ENCODE measurements at regions of chr6 and their contacts with region 1.

Region 1: DNA sequence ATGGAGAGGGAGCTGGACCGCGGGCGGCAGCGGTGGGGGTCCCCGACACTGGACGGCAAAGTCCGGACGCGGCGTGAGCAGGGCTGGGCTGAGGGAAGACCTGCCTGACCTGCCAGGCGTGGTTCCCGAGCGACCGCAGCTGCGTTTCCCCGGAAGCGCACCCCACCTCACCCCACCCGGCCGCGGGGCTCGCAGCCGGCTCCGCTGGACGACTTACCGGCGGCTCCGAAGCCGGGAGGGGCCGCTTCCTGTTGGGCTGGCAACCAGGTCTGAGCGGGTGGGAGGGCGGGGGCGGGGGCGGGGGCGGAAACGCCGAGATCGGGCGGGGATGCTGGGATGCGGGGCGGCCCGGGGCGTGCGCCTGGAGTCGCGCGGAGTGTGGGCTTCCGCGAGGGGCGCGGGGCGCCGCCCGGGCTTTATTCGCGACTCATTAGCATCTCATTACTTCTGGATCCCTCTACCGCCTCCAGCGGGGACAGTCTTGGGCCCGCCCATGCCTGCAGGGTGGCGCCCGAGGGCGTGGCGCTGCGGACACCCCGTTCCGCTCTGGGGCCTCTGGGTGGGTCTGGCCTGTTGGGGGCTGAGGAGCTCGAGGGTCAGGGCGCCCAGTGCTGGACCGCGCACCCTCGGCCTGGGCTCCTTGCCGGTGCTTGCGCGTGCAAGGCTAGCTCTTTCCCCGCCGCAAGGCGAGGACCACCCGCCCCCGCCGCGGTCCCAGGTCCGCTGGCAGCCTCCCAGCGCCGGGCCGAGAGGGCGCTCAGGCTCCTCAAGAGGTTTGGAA is at the start of gene MICAL1:
- DNase-seq: peak; percentile 93
- H3K4me3 ChIP-seq: peak within 1 kb of the TSS; percentile 82
- H3K27ac ChIP-seq: peak within 1 kb of the TSS; percentile 99
- H3K4me1 ChIP-seq: peaks cover 82% of the 10 kb centered on the region
- CTCF ChIP-seq: peak; percentile 44; the same call in 1 of the 2 replicates
- total RNA-seq, gene MICAL1: 69.2 and 79.5 TPM in 2 replicates

Region 2: DNA sequence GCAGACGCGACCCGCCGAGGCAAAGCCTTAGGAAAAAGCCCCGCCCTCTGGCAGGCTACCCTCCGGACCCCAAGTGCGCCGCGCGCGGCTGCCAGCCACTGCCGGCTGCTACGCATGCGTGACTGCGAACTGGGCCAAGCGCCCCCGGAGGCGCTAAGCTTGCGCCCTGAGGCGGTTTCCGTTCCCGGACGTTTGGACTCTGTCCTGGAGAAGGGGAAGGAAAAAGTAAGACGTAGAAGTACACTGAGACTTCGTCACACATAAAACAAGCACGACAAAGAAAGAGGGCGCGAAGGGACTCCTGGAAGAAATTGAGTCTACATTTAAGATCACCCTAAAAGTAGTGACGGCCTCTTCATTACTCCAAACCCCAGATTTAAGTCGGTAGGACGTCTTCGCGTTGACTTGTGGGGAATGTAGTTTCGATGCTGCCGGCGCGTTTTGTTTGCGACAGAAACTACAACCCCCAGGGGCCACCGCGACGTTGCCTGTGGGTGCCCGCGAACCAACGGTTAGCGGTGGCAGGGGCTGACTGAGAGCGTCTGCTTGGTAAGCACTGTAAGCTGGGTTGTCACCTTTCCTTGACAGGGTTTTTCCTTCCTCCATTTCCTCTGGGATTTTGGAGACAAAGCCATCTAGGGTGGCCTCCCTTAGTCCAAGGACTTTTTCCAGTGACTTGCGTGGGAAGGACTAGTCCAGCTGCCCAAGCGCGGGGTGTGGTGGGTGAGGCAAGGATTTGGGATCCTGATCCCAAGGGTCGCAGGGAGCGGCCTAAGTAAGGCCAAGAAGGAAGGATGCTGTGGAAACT is 360.5 kb before region 1 on chr6 and contains the start of gene CEP57L1:
- CTCF ChIA-PET with region 1: no interaction called
- POLR2A ChIA-PET with region 1: no interaction called
- intact Hi-C with region 1: loop called (anchors 10 kb)
- DNase-seq: peak; percentile 98
- H3K4me3 ChIP-seq: peak within 1 kb of the TSS; percentile 92
- H3K27ac ChIP-seq: peak within 1 kb of the TSS; percentile 87
- H3K4me1 ChIP-seq: peaks cover 25% of the 10 kb centered on the region
- CTCF ChIP-seq: peak; percentile 46; the same call in 1 of the 2 replicates
- total RNA-seq, gene CEP57L1: 22.7 and 26.7 TPM in 2 replicates

Region 3: DNA sequence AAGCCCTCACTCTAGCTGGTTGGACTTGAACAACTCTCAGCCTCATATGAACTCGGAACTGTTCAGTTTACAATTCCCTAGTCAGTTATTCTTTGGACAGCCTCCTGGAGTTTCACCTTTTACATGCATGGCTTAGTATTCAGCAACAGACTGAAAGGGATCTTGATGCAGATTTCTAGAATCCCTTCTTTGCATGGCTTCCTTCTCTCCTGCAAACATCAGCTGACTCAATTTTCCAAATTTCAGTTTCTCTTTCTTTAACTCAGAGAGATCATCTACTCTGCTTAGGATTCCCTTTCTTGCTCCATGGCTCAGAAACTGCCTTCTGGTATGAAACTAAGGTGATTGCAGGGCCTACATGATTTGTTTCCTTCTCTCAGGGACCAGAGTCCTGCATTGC is 260.8 kb before region 1 on chr6:
- CTCF ChIA-PET with region 1: no interaction called
- POLR2A ChIA-PET with region 1: no interaction called
- intact Hi-C with region 1: no loop called
- DNase-seq: no peak
- H3K4me3 ChIP-seq: no peak overlapping the region
- H3K27ac ChIP-seq: no peak overlapping the region
- H3K4me1 ChIP-seq: no peaks in the 10 kb centered on the region
- CTCF ChIP-seq: no peak

Region 4: GRCh38 chr6:109428889-109429477 is 26.7 kb before region 1 on chr6:
- CTCF ChIA-PET with region 1: no interaction called
- POLR2A ChIA-PET with region 1: no interaction called
- intact Hi-C with region 1: no loop called
- DNase-seq: no peak
- H3K4me3 ChIP-seq: no peak overlapping the region
- H3K27ac ChIP-seq: no peak overlapping the region
- H3K4me1 ChIP-seq: peaks cover 13% of the 10 kb centered on the region
- CTCF ChIP-seq: no peak

Region 5: DNA sequence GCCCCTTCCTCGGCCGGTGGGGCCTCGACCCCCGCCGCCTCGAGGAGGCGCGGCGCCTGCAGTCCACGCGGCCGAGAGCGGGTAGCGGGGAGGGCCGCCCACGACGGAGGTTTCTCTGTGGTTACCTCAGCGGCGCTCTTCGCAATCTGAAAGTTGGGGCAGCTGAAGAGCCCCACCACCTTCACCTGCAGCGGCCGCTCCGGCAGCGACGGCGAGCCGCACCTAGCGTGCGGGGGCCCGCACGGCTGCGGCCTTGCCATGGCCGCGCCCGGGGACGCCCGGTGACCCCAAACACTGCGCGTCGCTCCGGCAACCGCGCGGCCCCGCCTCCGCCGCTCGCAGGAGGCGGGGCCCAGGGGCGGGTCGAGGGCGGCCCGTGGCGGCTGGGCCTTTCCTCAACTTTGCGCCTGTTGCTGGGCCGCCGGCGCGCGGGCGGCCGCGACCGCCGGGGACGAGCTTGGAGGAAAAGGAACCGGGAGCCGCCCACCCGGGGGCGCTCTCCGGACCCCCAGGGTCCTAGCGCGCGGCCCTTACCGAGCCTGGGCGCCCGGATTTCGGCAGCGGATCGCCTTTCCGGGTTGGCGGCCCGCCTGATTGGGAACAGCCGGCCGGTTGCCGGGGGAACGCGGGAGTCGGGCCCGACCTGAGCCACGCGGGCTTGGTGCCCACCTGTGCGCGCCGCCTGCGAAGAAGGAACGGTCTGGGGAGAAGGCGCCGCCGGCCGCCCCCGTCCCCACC is 15.2 kb before region 1 on chr6 and contains the starts of genes PPIL6 and SMPD2:
- CTCF ChIA-PET with region 1: interaction called, 5 read pairs
- POLR2A ChIA-PET with region 1: interaction called, 64 read pairs
- intact Hi-C with region 1: loop called (anchors 1 kb)
- DNase-seq: peak; percentile 89
- H3K4me3 ChIP-seq: peak within 1 kb of the TSS; percentile 83
- H3K27ac ChIP-seq: peak within 1 kb of the TSS; percentile 57
- H3K4me1 ChIP-seq: peaks cover 18% of the 10 kb centered on the region
- CTCF ChIP-seq: peak; percentile 57
- total RNA-seq, gene PPIL6: 0.15 and 1.6 TPM in 2 replicates
- total RNA-seq, gene SMPD2: 18.4 and 24.4 TPM in 2 replicates

Region 6: GRCh38 chr6:109465772-109466171 is 10.1 kb after region 1 on chr6:
- CTCF ChIA-PET with region 1: no interaction called
- POLR2A ChIA-PET with region 1: interaction called, 20 read pairs
- intact Hi-C with region 1: no loop called
- DNase-seq: no peak
- H3K4me3 ChIP-seq: no peak overlapping the region
- H3K27ac ChIP-seq: no peak overlapping the region
- H3K4me1 ChIP-seq: peaks cover 18% of the 10 kb centered on the region
- CTCF ChIP-seq: no peak

Region 7: GRCh38 chr6:109477725-109478124 is 22.0 kb after region 1 on chr6:
- CTCF ChIA-PET with region 1: interaction called, 3 read pairs
- POLR2A ChIA-PET with region 1: interaction called, 19 read pairs
- intact Hi-C with region 1: loop called (anchors 1 kb)
- DNase-seq: no peak
- H3K4me3 ChIP-seq: peak overlapping the region; percentile 96
- H3K27ac ChIP-seq: no peak overlapping the region
- H3K4me1 ChIP-seq: peaks cover 74% of the 10 kb centered on the region
- CTCF ChIP-seq: no peak

Region 8: DNA sequence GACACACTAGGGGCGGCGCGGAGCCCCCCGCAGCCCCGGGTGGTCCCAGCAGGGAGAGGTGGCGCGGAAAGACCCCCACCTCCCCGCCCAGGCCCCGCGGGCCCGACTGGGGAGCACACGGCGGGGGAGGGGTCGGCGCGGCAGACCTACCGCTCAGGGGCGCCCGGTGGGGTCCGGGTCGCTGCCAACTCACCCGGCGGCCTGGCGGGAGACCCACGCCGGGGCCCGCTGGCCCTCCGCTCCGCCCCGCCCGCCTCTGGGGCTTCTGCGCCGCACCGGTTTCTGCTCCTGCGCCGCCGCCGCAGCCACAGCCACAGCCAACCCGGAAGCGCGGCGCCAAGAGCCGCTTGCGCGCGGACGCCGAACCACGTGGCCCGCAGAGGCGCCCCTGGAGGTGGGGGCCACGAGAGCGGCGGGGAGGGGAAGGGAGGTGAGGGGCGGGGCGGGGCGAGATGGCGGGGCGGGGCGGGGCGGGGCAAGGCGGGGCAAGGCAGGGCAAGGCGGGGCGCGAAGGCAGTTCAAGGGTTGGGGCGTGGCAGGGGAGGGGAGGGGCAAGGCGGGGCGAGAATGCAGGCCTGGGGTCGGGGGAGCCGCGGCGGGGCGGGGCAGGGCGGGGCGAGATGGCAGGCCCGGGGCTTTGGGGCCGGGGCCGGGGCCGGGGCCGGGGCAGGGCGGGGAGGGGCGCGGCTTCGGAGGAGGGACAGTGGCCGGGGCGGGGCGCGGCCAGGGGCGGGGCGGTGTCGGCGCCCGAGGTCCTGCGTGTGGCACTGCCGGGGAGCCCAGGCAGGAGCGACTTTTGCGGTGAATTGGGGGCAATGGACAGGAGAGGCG is 27.4 kb after region 1 on chr6 and contains the start of gene ZBTB24:
- CTCF ChIA-PET with region 1: interaction called, 3 read pairs
- POLR2A ChIA-PET with region 1: interaction called, 19 read pairs
- intact Hi-C with region 1: loop called (anchors 1 kb)
- DNase-seq: peak; percentile 95
- H3K4me3 ChIP-seq: peak within 1 kb of the TSS; percentile 96
- H3K27ac ChIP-seq: peak within 1 kb of the TSS; percentile 51
- H3K4me1 ChIP-seq: peaks cover 49% of the 10 kb centered on the region
- CTCF ChIP-seq: no peak
- total RNA-seq, gene ZBTB24: 13.7 and 15.3 TPM in 2 replicates

Region 9: GRCh38 chr6:109690737-109691621 is 235.3 kb after region 1 on chr6 and contains the starts of genes AK9 and FIG4:
- CTCF ChIA-PET with region 1: interaction called, 3 read pairs
- POLR2A ChIA-PET with region 1: interaction called, 4 read pairs
- intact Hi-C with region 1: loop called (anchors 5 kb)
- DNase-seq: peak; percentile 92
- H3K4me3 ChIP-seq: peak within 1 kb of the TSS; percentile 93
- H3K27ac ChIP-seq: peak within 1 kb of the TSS; percentile 31
- H3K4me1 ChIP-seq: peaks cover 27% of the 10 kb centered on the region
- CTCF ChIP-seq: peak; percentile 57
- total RNA-seq, gene AK9: 2.0 and 6.7 TPM in 2 replicates
- total RNA-seq, gene FIG4: 10.4 and 13.3 TPM in 2 replicates